H1 (cell line): ENCODE measurements at regions of chr1 and their contacts with region 1.

Region 1: GRCh38 chr1:197868751-197869489 is 33.5 kb upstream of the C1orf53 start:
- DNase-seq: peak in 1 of 2 experiments; percentile 23
- H3K4me3 ChIP-seq: no peak overlapping the region
- H3K27ac ChIP-seq: no peak overlapping the region
- H3K4me1 ChIP-seq: no peaks in the 10 kb centered on the region; a peak in 1 of 7 replicates
- H3K27me3 ChIP-seq: no peaks in the 10 kb centered on the region
- CTCF ChIP-seq: peak; percentile 7 to 83 (median 82)
- EP300 ChIP-seq: no peak
- POLR2A ChIP-seq: no peak
- RAD21 ChIP-seq: peak; percentile 97 to 99

Region 2: GRCh38 chr1:197884173-197884572 is 15.3 kb after region 1 on chr1:
- CTCF ChIA-PET with region 1: interaction called, 10 read pairs
- POLR2A ChIA-PET with region 1: no interaction called
- DNase-seq: no peak
- H3K4me3 ChIP-seq: no peak overlapping the region
- H3K27ac ChIP-seq: no peak overlapping the region
- H3K4me1 ChIP-seq: no peaks in the 10 kb centered on the region
- H3K27me3 ChIP-seq: no peaks in the 10 kb centered on the region
- CTCF ChIP-seq: no peak
- EP300 ChIP-seq: no peak
- POLR2A ChIP-seq: no peak
- RAD21 ChIP-seq: no peak

Region 3: DNA sequence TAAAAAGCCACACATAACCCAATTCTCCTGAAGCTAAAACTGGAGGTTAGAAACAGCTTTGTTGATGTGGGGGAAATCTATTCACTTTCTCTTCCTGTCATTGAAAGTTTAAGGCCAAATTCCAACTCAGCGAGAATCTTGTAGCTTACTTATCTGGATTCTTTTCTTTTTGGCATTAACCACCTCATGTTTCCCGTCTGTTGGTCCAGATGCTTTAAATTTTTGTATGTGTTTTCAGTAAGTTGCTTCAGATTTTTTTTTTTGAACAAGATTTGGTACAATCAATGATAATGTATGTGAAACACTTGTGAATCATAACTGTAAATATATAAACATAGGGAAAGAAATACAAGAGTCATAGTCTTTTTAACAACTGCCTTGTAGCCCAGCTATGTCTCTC is 254.2 kb after region 1 on chr1:
- CTCF ChIA-PET with region 1: no interaction called
- POLR2A ChIA-PET with region 1: no interaction called
- DNase-seq: no peak
- H3K4me3 ChIP-seq: no peak overlapping the region
- H3K27ac ChIP-seq: no peak overlapping the region
- H3K4me1 ChIP-seq: no peaks in the 10 kb centered on the region
- H3K27me3 ChIP-seq: no peaks in the 10 kb centered on the region; a peak in 1 of 7 replicates
- CTCF ChIP-seq: no peak
- EP300 ChIP-seq: no peak
- POLR2A ChIP-seq: no peak
- RAD21 ChIP-seq: no peak